HCT116 (cell line): ENCODE measurements at regions of chr1 and their contacts with region 1.

Region 1: DNA sequence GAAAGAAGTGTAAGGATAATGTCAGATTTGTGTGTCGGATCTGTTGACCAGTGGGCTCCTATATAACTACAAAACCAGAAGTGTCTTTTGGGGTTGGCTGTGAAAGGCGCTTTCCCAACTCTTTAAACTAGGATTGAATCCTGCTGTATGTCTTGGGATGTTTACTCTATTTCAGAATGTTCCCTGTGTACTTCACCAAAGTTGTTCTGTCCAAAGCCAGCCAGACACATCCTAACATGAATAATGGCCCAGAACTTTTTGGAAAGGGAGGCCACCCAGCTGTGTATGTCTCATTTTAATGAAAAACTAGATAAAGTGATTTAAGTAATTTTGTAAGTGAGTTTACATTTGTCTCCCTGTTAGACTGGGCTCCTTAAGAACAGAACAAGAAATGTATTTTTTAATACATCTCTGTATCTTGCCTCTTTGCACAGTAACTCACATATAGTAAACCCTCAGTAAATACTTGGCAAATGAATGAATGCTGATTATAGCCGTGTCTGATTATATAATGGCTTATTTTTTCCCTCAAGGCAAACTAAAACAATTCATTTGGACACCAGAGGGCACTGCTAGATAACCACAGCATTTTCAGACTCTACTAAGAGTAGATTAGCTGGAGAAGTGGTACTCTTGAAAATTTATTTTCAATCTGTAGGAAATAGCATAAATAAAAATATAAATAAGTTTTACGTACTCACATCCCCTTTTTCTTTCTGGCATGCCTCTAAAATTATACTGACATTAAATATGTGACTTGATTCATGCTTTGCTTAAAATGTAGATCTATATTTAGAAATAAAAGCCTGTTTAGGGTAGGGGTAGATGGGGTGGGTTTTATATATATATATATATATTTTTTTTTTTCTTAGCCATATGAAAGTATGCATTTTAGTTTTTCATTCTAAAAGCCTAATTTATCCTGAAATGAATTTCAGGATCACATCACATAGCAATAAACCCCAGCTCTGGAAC is 23.8 kb downstream of the TSEN15 start:
- DNase-seq: peak; percentile 40
- ATAC-seq: peak; percentile 74
- H3K4me3 ChIP-seq: no peak overlapping the region
- H3K27ac ChIP-seq: no peak overlapping the region
- H3K4me1 ChIP-seq: no peaks in the 10 kb centered on the region
- H3K27me3 ChIP-seq: no peaks in the 10 kb centered on the region
- CTCF ChIP-seq: peak; percentile 58 to 77 (median 71)
- POLR2A ChIP-seq: no peak
- RAD21 ChIP-seq: peak; percentile 87

Region 2: DNA sequence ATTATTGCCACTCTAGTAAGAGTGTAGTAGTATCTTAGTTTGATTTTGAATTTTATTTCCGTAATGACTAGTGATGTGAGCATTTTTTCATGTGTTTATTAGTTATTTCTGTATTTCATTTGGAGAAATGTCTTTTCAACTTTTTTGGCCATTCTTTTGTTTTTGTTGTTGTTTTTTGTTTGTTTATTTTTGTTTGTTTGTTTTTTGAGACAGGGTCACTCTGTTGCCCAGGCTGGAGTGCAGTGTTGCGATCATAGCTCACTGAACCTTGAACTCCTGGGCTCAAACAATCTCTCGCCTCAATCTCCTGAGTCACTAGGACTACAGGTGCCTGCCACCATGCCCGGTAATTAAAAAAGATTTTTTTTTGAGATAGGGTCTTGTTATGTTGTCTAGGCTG is 52.2 kb after region 1 on chr1:
- CTCF ChIA-PET with region 1: no interaction called
- POLR2A ChIA-PET with region 1: no interaction called
- RAD21 ChIA-PET with region 1: no interaction called
- intact Hi-C with region 1: no loop called
- DNase-seq: no peak
- ATAC-seq: no peak
- H3K4me3 ChIP-seq: no peak overlapping the region
- H3K27ac ChIP-seq: no peak overlapping the region
- H3K4me1 ChIP-seq: no peaks in the 10 kb centered on the region
- H3K27me3 ChIP-seq: no peaks in the 10 kb centered on the region
- CTCF ChIP-seq: no peak
- POLR2A ChIP-seq: no peak
- RAD21 ChIP-seq: no peak

Region 3: GRCh38 chr1:184222652-184223052 is 147.3 kb after region 1 on chr1:
- CTCF ChIA-PET with region 1: interaction called, 8 read pairs
- POLR2A ChIA-PET with region 1: no interaction called
- RAD21 ChIA-PET with region 1: interaction called in 1 of 2 experiments, 3 read pairs
- intact Hi-C with region 1: loop called (anchors 1 kb)
- DNase-seq: peak; percentile 29
- ATAC-seq: peak; percentile 75
- H3K4me3 ChIP-seq: 0 out of 4 replicates have a peak overlapping the region, but pooled peaks of 1 of the 2 experiments have one; percentile 2
- H3K27ac ChIP-seq: no peak overlapping the region
- H3K4me1 ChIP-seq: no peaks in the 10 kb centered on the region
- H3K27me3 ChIP-seq: no peaks in the 10 kb centered on the region
- CTCF ChIP-seq: peak; percentile 80 to 95 (median 88)
- POLR2A ChIP-seq: no peak
- RAD21 ChIP-seq: peak; percentile 86

Region 4: GRCh38 chr1:184563308-184563707 is 488.0 kb after region 1 on chr1:
- CTCF ChIA-PET with region 1: interaction called, 5 read pairs
- POLR2A ChIA-PET with region 1: no interaction called
- RAD21 ChIA-PET with region 1: no interaction called
- intact Hi-C with region 1: loop called (anchors 1 kb)
- DNase-seq: no peak
- ATAC-seq: peak; percentile 47; the same call in 1 of the 2 replicates
- H3K4me3 ChIP-seq: no peak overlapping the region
- H3K27ac ChIP-seq: no peak overlapping the region
- H3K4me1 ChIP-seq: no peaks in the 10 kb centered on the region
- H3K27me3 ChIP-seq: no peaks in the 10 kb centered on the region
- CTCF ChIP-seq: peak; percentile 32 to 55 (median 48); a peak in 5 of 6 replicates
- POLR2A ChIP-seq: no peak
- RAD21 ChIP-seq: peak; percentile 73

Region 5: DNA sequence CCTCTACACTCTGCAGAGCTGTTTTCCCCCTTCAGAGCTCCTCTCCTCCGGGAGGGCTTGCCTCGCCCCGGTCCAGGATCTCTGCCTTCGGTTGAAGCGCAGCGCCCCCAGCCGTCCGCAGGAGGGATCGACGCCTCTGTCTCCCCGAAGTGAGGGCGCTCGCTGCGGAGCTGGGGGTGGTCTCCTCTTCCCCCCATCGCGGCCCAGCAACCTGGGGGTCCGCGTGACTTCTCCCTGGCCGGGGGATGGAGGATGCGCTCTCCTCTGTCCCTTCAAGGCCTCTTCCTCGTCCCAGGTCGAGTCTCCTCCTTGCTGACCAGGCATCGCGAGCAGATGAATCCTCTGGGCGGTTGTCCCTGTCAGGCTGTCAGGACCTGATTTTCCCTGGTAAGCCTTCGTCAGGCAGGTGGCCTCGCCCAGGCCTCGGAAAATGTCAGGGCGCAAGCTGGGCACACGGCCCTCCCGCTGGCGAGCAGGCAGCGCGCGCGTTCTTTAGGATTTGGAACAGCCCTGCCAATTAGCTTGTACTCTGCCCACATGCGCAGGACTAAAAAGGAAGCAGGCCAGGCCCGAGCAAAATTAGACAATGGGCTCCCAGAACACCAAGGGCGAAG is 588.8 kb after region 1 on chr1:
- CTCF ChIA-PET with region 1: interaction called, 15 read pairs
- POLR2A ChIA-PET with region 1: no interaction called
- RAD21 ChIA-PET with region 1: no interaction called
- intact Hi-C with region 1: loop called (anchors 1 kb)
- DNase-seq: peak; percentile 26
- ATAC-seq: peak; percentile 98
- H3K4me3 ChIP-seq: peak overlapping the region; percentile 18 to 31
- H3K27ac ChIP-seq: no peak overlapping the region
- H3K4me1 ChIP-seq: peaks cover 0 to 6% of the 10 kb centered on the region in 2 experiments; a peak in 2 of 4 replicates
- H3K27me3 ChIP-seq: no peaks in the 10 kb centered on the region
- CTCF ChIP-seq: peak; percentile 74 to 94 (median 88); a peak in 5 of 6 replicates
- POLR2A ChIP-seq: no peak
- RAD21 ChIP-seq: peak; percentile 89

Region 6: DNA sequence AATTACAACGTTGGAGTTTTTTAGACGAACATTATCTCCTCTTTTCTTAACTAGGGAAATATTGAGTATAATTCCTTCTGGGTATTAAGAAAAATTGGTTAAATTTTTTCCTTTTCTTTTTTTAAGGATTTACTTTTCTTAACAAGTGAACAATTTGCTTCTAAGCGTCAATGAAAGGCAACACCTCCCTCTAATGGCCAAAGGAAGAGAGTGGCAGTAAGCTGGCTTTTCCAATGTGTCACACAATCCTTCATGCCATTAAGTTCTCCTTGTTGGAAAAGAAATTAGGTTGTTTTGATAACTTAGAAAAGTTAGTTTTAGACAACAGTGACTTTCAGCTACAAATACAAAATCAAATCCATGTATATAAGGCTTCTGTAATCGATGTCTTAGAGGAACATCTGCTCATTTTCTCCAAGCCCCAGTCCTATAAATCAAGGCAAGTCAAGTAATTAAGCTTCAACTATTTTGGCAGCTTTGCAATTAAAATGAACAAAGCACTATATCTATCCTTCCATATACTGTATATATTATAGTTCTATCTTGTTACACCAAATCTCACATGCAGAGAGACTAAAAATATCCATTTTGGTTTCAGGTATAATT is 616.5 kb after region 1 on chr1:
- CTCF ChIA-PET with region 1: interaction called, 3 read pairs
- POLR2A ChIA-PET with region 1: no interaction called
- RAD21 ChIA-PET with region 1: no interaction called
- intact Hi-C with region 1: loop called (anchors 1 kb)
- DNase-seq: peak; percentile 13
- ATAC-seq: peak; percentile 67
- H3K4me3 ChIP-seq: no peak overlapping the region
- H3K27ac ChIP-seq: no peak overlapping the region
- H3K4me1 ChIP-seq: no peaks in the 10 kb centered on the region
- H3K27me3 ChIP-seq: no peaks in the 10 kb centered on the region
- CTCF ChIP-seq: peak; percentile 50 to 79 (median 78); a peak in 5 of 6 replicates
- POLR2A ChIP-seq: no peak
- RAD21 ChIP-seq: peak; percentile 73